Stomach (tissue), 19 donors: ENCODE measurements at regions of chr14 and their contacts with region 1.

Region 1: GRCh38 chr14:96424109-96424989 is 32.4 kb downstream of the AK7 start:
- DNase-seq: peak; percentile 38 to 88
- H3K4me3 ChIP-seq: peak overlapping the region; percentile 34 to 50 (median 39)
- H3K27ac ChIP-seq: peak overlapping the region in 1 of 5 donors; percentile 49
- H3K4me1 ChIP-seq: peaks cover 0 to 10% (median 7%) of the 10 kb centered on the region in 4 donors
- H3K27me3 ChIP-seq: peaks cover 0 to 7% (median 0%) of the 10 kb centered on the region in 3 donors
- CTCF ChIP-seq: peak in 5 of 7 experiments; percentile 69 to 84 (median 82)
- EP300 ChIP-seq: no peak
- POLR2A ChIP-seq: no peak

Region 2: GRCh38 chr14:95327558-95328374 is 1096.6 kb before region 1 on chr14:
- intact Hi-C with region 1: no loop called
- DNase-seq: no peak
- H3K4me3 ChIP-seq: no peak overlapping the region
- H3K27ac ChIP-seq: no peak overlapping the region
- H3K4me1 ChIP-seq: peaks cover 0 to 7% (median 1%) of the 10 kb centered on the region in 4 donors
- H3K27me3 ChIP-seq: no peaks in the 10 kb centered on the region
- CTCF ChIP-seq: no peak
- EP300 ChIP-seq: no peak
- POLR2A ChIP-seq: no peak

Region 3: GRCh38 chr14:96294246-96294645 is 130.1 kb before region 1 on chr14:
- intact Hi-C with region 1: loop called (anchors 5 kb)
- DNase-seq: no peak
- H3K4me3 ChIP-seq: no peak overlapping the region
- H3K27ac ChIP-seq: no peak overlapping the region
- H3K4me1 ChIP-seq: peaks cover 0 to 15% (median 4%) of the 10 kb centered on the region in 4 donors
- H3K27me3 ChIP-seq: no peaks in the 10 kb centered on the region
- CTCF ChIP-seq: no peak
- EP300 ChIP-seq: no peak
- POLR2A ChIP-seq: no peak

Region 4: GRCh38 chr14:96479435-96480146 is 55.2 kb after region 1 on chr14:
- intact Hi-C with region 1: no loop called
- DNase-seq: peak in 1 of 2 donors; percentile 22
- H3K4me3 ChIP-seq: no peak overlapping the region
- H3K27ac ChIP-seq: no peak overlapping the region
- H3K4me1 ChIP-seq: no peaks in the 10 kb centered on the region
- H3K27me3 ChIP-seq: no peaks in the 10 kb centered on the region
- CTCF ChIP-seq: no peak
- EP300 ChIP-seq: no peak
- POLR2A ChIP-seq: no peak